ENCODE measurements at regions of chr16 and their contacts with region 1.

Region 1: DNA sequence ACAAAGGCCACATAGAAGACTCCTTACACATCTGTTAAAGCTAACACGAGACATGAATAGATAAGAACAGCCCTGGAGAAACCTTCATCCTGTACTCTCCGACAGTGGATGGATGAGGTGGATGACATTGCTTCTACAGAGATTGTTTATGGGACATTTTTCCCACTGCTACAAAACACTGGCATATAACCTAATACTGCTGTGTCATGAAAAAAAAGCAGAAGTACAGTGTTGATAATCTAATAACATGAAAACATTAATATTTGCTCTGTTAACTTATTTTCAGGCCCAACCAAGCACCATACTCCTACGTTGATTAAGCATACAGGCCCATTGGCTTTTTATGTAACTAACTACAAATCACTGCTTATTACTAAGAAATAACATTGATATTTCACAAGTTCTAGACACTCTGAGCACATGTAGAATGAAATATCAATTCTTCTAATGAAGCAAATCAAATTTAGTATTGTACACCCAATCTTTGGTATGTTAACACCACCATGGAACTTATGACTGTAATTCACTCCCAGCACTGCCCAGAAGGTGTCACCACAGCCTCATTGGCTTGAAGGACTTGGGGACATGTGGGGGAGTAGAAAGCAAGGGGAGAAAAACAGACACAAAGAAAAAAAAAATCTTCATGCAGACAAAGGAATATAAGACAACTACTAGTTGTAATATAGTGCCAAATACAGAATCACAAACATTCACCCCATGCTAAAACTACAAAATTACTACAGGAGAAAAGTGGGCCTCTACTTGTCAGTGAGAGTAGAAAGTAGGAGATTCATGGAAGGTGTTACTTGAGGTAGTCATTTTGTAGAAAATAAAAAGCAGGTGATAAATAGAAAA is 330.0 kb upstream of the PMFBP1 start:
- DNase-seq: peak; percentile 61
- CTCF ChIP-seq: peak; percentile 90

Region 2: GRCh38 chr16:72409423-72409822 is 92.5 kb before region 1 on chr16:
- CTCF ChIA-PET with region 1: no interaction called
- POLR2A ChIA-PET with region 1: no interaction called
- DNase-seq: no peak
- CTCF ChIP-seq: no peak

Region 3: DNA sequence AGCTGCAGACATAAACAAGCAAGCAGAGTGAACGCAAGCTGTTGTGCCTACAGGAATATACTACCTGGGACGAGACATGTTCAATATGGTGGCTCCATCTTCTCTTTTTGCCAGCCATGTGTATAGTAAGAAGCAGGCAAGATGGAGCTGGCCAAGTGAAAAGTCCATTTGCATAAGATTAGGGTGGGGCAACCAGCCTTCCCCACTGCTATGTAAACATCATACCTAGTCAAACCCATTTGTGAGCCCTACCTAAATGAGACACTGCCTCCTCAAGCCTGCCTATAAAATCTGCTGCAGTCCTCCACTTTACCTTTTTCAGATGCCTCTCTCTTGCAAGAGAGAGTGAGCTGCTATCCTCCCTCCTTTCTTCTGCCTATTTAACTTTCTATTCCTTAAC is 40.1 kb after region 1 on chr16:
- CTCF ChIA-PET with region 1: no interaction called
- POLR2A ChIA-PET with region 1: no interaction called
- DNase-seq: no peak
- CTCF ChIP-seq: no peak

Region 4: GRCh38 chr16:72847187-72848027 is 345.4 kb after region 1 on chr16:
- CTCF ChIA-PET with region 1: interaction called, 13 read pairs
- POLR2A ChIA-PET with region 1: no interaction called
- DNase-seq: peak; percentile 67
- CTCF ChIP-seq: peak; percentile 74

Region 5: DNA sequence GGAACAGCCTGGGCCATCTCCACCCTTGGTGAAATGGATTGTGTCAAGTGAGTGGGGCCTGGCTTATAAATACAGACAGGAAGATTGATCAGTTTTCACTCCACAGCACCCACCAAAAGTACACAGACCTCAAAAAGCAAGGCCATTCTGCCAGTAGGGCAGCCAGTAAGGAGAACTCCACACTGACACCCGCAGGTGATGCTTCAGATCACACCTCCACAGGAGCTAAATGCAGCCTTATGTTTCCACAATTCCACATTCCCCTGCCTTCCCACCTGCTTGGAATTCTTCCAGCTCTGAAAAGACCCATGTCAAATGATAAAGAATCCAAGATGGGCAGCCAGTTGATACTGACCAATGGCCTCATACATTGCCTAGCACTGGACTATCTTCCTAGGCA is 354.8 kb after region 1 on chr16:
- CTCF ChIA-PET with region 1: interaction called, 19 read pairs
- POLR2A ChIA-PET with region 1: no interaction called
- DNase-seq: peak; percentile 53
- CTCF ChIP-seq: peak; percentile 47

Measured in GM10248 (cell line).